ENCODE measurements at regions of chr13 and their contacts with region 1.

Region 1: DNA sequence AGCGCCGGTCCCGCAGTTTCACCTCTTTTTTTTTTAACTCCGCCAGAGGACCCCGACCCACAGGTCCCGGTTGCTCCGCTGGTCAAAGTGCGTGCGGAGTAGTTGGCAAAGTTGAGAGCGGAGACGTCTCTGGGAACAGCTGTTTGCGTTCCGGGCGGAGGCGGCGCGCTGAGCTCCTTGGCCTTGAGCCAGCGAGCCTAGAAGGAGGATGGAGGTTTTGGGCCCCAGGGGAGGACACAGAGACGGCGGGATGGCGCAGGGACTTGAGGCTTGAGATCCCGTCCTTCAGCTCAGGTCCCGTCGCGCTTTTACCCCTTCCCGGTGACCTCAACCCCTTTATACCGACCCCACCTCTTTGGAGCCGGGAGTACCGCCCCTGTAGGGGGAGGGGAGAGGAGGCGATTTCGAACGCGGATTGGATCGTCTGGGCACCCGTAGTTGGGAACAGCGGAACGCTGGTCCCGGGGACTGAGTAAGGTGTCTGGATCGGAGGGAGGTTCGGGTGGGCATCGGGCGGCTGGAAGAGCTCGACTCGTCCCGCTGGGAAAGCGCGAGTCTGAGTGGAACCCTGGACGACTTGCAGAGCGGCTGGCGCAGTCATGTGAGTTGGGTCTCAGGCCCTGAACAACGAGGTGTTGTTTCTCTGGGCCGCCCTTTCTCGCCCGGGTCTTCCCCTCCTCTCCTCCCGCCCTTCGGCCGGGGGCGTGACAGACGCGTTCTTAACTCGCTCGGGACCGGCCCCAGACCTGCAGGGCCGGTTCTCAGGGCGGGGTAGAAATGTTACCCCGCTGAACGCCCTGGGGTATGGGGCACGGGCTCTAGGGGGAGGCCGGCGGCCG is at the start of gene WBP4:
- DNase-seq: peak; percentile 84 to 92
- H3K4me3 ChIP-seq: peak within 1 kb of the TSS; percentile 79
- H3K27ac ChIP-seq: peak within 1 kb of the TSS; percentile 98
- H3K4me1 ChIP-seq: peaks cover 43% of the 10 kb centered on the region
- H3K27me3 ChIP-seq: no peaks in the 10 kb centered on the region
- CTCF ChIP-seq: no peak
- total RNA-seq, gene WBP4: 4.2 and 6.3 TPM in 2 replicates

Region 2: DNA sequence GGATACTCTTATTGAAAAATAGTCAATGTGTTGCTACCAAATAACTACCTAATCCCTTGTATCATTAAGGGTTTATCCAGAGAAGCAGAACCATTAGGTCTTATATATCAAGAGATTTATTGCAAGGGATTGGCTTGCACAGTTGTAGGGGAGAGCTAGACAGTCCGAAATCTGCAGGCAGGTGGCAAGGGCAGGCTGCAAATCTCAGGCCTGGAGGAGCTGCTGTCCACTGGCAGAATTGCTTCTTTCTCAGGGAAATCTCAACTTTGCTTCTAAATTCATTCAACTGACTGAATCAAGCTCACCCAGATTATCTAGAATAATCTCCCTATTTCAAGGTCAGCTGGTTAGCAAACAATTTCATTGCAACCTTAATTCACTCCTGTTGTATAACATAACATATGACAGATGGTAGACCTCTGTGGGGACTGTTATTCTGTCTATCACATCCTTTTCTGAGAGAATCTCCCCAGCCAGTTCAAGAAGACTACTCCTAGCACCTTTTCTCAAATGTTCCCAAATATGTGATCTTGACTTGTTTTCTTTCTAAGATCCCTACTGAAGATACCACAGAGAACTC is 1828.8 kb before region 1 on chr13:
- CTCF ChIA-PET with region 1: no interaction called
- POLR2A ChIA-PET with region 1: no interaction called
- intact Hi-C with region 1: no loop called
- DNase-seq: no peak
- H3K4me3 ChIP-seq: no peak overlapping the region
- H3K27ac ChIP-seq: no peak overlapping the region
- H3K4me1 ChIP-seq: no peaks in the 10 kb centered on the region
- H3K27me3 ChIP-seq: peaks cover 5% of the 10 kb centered on the region; the same call in 1 of the 2 replicates
- CTCF ChIP-seq: no peak

Region 3: GRCh38 chr13:40770934-40771618 is 290.2 kb before region 1 on chr13 and contains the start of gene MRPS31:
- CTCF ChIA-PET with region 1: no interaction called
- POLR2A ChIA-PET with region 1: no interaction called
- intact Hi-C with region 1: loop called (anchors 5 kb)
- DNase-seq: peak; percentile 80 to 92
- H3K4me3 ChIP-seq: peak within 1 kb of the TSS; percentile 75
- H3K27ac ChIP-seq: peak within 1 kb of the TSS; percentile 57
- H3K4me1 ChIP-seq: peaks cover 6% of the 10 kb centered on the region; the same call in 1 of the 2 replicates
- H3K27me3 ChIP-seq: no peaks in the 10 kb centered on the region
- CTCF ChIP-seq: no peak
- total RNA-seq, gene MRPS31: 14.5 and 22.2 TPM in 2 replicates

Region 4: GRCh38 chr13:40789275-40790133 is 271.8 kb before region 1 on chr13 and contains the start of gene SLC25A15:
- CTCF ChIA-PET with region 1: no interaction called
- POLR2A ChIA-PET with region 1: no interaction called
- intact Hi-C with region 1: loop called (anchors 5 kb)
- DNase-seq: peak; percentile 66 to 88
- H3K4me3 ChIP-seq: peak within 1 kb of the TSS; percentile 94
- H3K27ac ChIP-seq: peak within 1 kb of the TSS; percentile 72
- H3K4me1 ChIP-seq: peaks cover 6% of the 10 kb centered on the region; the same call in 1 of the 2 replicates
- H3K27me3 ChIP-seq: no peaks in the 10 kb centered on the region
- CTCF ChIP-seq: no peak
- total RNA-seq, gene SLC25A15: 7.2 and 10.9 TPM in 2 replicates

Region 5: DNA sequence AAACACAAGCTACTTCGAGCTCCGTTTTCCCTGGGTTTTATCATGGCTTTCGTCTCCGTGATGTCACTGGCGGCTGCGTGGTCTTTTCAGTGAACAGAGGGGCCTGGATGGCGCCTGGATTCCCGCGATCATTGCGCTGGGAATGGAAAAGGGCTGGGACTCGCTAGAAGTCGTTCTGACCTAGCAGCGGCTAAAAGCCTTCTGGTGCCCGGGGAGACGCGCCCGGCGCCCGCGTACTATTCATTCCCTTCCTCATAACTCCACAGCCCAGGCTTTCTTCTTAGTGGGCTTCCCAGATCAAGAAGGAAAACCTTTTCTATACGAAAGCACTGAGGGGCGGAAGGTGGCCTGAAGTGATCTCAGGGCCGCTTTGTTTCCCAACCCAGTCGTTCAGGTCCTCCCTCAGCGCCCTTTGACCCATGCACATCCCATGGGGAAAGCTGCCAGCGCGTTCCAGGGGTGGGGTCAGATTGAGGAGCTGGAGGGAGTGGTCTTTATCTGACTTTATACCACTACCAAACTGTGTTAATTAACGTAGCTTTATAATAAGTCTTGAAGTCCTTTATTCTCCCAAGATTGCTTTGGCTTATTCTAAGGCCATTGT is 138.8 kb before region 1 on chr13:
- CTCF ChIA-PET with region 1: no interaction called
- POLR2A ChIA-PET with region 1: no interaction called
- intact Hi-C with region 1: loop called (anchors 2 kb)
- DNase-seq: no peak
- H3K4me3 ChIP-seq: no peak overlapping the region
- H3K27ac ChIP-seq: no peak overlapping the region
- H3K4me1 ChIP-seq: 0 out of 2 replicates have a peak, but pooled peaks cover 4% of the 10 kb centered on the region
- H3K27me3 ChIP-seq: no peaks in the 10 kb centered on the region
- CTCF ChIP-seq: no peak

Region 6: DNA sequence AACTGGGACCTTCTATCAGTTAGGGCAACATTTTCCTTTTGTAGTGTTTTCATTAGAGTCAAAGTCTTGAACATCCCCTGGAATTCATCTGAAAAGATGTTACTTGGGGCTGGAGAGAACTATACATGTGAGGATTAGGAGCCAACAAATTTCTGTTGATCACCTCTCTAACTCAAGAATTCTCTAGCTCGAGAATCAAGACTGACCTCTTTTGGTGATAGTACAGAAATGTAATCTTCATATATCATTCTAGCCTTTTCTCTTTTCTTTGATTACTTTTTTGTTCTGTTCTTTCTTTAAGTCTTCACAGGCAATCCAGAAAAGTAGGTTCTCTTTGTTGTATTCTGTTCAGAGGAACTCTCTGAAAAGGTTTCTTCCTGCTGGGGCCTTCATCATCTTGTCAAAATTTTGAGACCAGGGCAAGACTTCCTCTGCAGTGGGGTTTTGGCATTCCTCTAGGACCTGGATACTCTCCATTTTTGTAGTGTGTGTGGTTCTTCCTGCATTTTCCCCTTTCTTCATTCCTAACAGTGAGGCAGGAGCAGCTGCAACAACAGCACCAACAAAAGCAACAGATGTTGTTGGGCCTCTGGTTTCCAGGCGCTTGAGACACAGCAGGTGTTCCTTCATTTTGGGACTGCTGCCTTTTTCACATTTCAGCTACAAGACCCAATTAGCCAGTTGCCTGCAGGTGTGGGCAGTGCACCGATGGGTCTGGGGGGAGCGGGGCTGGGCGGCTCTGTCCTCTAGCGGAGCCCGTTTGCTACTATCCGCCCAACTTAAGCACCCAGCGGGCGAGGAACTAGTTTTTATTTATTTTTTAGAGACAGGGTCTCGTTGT is 68.4 kb before region 1 on chr13:
- CTCF ChIA-PET with region 1: no interaction called
- POLR2A ChIA-PET with region 1: interaction called, 4 read pairs
- intact Hi-C with region 1: loop called (anchors 1 kb)
- DNase-seq: no peak
- H3K4me3 ChIP-seq: no peak overlapping the region; the same call in 1 of the 2 replicates
- H3K27ac ChIP-seq: peak overlapping the region; percentile 96
- H3K4me1 ChIP-seq: peaks cover 38% of the 10 kb centered on the region
- H3K27me3 ChIP-seq: no peaks in the 10 kb centered on the region
- CTCF ChIP-seq: no peak; the same call in 1 of the 2 replicates

Region 7: DNA sequence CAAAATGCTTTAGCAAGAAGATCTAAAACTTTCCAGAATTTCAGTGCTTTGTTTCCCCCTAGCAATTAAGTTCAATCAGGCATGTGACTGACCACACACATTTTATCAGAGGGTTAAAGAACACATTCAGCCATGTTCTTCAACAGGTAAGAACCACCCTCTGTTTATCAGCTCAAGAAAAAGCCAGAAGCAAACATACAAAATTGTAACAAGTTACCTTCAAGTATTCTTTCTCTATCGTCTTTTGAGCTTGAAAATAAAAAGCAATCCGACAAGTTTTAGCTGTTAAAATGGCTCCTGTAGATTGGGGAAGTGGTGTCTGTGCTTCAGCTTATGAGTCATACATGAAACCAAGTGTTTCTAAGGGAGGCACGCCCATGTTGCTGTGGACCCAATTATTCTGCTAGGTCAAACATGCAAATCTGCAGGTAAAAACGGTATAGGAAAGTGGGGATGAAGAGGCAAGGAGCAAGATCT is 42.2 kb before region 1 on chr13 and contains the start of gene ELF1:
- CTCF ChIA-PET with region 1: no interaction called
- POLR2A ChIA-PET with region 1: no interaction called
- intact Hi-C with region 1: loop called (anchors 2 kb)
- DNase-seq: peak; percentile 48 to 86
- H3K4me3 ChIP-seq: peak within 1 kb of the TSS; percentile 77
- H3K27ac ChIP-seq: peak within 1 kb of the TSS; percentile 100
- H3K4me1 ChIP-seq: peaks cover 31% of the 10 kb centered on the region
- H3K27me3 ChIP-seq: no peaks in the 10 kb centered on the region
- CTCF ChIP-seq: no peak
- total RNA-seq, gene ELF1: 31.2 and 36.0 TPM in 2 replicates

Region 8: DNA sequence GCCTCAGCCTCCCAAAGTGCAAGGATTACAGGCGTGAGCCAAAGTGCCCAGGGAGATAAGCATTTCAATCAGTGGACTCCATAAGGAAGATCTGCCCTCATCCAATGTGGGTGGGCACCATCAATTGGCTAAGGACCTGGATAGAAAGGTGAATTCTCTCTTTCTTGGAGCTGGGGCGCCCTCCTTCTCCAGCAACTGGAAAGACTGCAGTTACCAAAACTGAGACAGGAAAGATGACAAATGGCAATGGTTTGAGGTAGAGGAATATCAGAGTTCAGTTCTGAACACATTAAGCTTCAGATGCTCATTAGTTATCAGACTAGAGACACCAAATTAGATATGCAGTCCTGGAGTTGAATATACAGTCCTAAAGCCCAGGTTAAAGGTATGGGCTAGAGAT is 31.7 kb before region 1 on chr13:
- CTCF ChIA-PET with region 1: no interaction called
- POLR2A ChIA-PET with region 1: no interaction called
- intact Hi-C with region 1: no loop called
- DNase-seq: no peak
- H3K4me3 ChIP-seq: no peak overlapping the region
- H3K27ac ChIP-seq: no peak overlapping the region
- H3K4me1 ChIP-seq: no peaks in the 10 kb centered on the region
- H3K27me3 ChIP-seq: no peaks in the 10 kb centered on the region
- CTCF ChIP-seq: no peak

Region 9: GRCh38 chr13:41099986-41100385 is 38.7 kb after region 1 on chr13:
- CTCF ChIA-PET with region 1: no interaction called
- POLR2A ChIA-PET with region 1: no interaction called
- intact Hi-C with region 1: no loop called
- DNase-seq: no peak
- H3K4me3 ChIP-seq: no peak overlapping the region
- H3K27ac ChIP-seq: no peak overlapping the region
- H3K4me1 ChIP-seq: no peaks in the 10 kb centered on the region
- H3K27me3 ChIP-seq: no peaks in the 10 kb centered on the region
- CTCF ChIP-seq: no peak

Region 10: GRCh38 chr13:41132512-41133152 is 71.3 kb after region 1 on chr13 and contains the start of gene KBTBD6:
- CTCF ChIA-PET with region 1: no interaction called
- POLR2A ChIA-PET with region 1: no interaction called
- intact Hi-C with region 1: loop called (anchors 1 kb)
- DNase-seq: peak; percentile 91
- H3K4me3 ChIP-seq: peak within 1 kb of the TSS; percentile 59
- H3K27ac ChIP-seq: peak within 1 kb of the TSS; percentile 73
- H3K4me1 ChIP-seq: peaks cover 13% of the 10 kb centered on the region
- H3K27me3 ChIP-seq: no peaks in the 10 kb centered on the region
- CTCF ChIP-seq: no peak
- total RNA-seq, gene KBTBD6: 4.3 TPM in 2 replicates

Measured in PC-9 (cell line).